ENCODE measurements at regions of chr20 and their contacts with region 1.

Region 1: GRCh38 chr20:62861726-62862336 is at the start of gene TCFL5:
- DNase-seq: peak; percentile 88 to 98 (median 92)
- ATAC-seq: peak; percentile 87
- H3K4me3 ChIP-seq: peak within 1 kb of the TSS; percentile 39
- H3K4me3 Mint-ChIP-seq: peak within 1 kb of the TSS; percentile 83
- H3K27ac ChIP-seq: peak within 1 kb of the TSS in 1 of 2 donors; percentile 21
- H3K27ac Mint-ChIP-seq: peak within 1 kb of the TSS; percentile 83
- H3K4me1 ChIP-seq: peaks cover 13% of the 10 kb centered on the region
- H3K4me1 Mint-ChIP-seq: peaks cover 27% of the 10 kb centered on the region
- H3K27me3 ChIP-seq: no peaks in the 10 kb centered on the region
- H3K27me3 Mint-ChIP-seq: no peaks in the 10 kb centered on the region
- CTCF ChIP-seq: no peak
- total RNA-seq, gene TCFL5: 5.9 to 6.3 TPM

Region 2: GRCh38 chr20:62219992-62220665 is 641.7 kb before region 1 on chr20 and contains the start of gene HRH3:
- CTCF ChIA-PET with region 1: no interaction called
- POLR2A ChIA-PET with region 1: no interaction called
- intact Hi-C with region 1: no loop called
- DNase-seq: peak in 13 of 14 experiments; percentile 13 to 74 (median 38)
- ATAC-seq: peak; percentile 89
- H3K4me3 ChIP-seq: no peak within 1 kb of the TSS
- H3K4me3 Mint-ChIP-seq: no peak within 1 kb of the TSS
- H3K27ac ChIP-seq: no peak within 1 kb of the TSS
- H3K27ac Mint-ChIP-seq: no peak within 1 kb of the TSS
- H3K4me1 ChIP-seq: peaks cover 16% of the 10 kb centered on the region
- H3K4me1 Mint-ChIP-seq: no peaks in the 10 kb centered on the region
- H3K27me3 ChIP-seq: peaks cover 52 to 55% of the 10 kb centered on the region in 2 experiments
- H3K27me3 Mint-ChIP-seq: peaks cover 54% of the 10 kb centered on the region
- CTCF ChIP-seq: no peak
- total RNA-seq, gene HRH3: not detected

Region 3: GRCh38 chr20:62652051-62652926 is 209.5 kb before region 1 on chr20:
- CTCF ChIA-PET with region 1: no interaction called
- POLR2A ChIA-PET with region 1: interaction called, 11 read pairs
- intact Hi-C with region 1: no loop called
- DNase-seq: peak; percentile 48 to 90 (median 64)
- ATAC-seq: peak; percentile 64
- H3K4me3 ChIP-seq: peak overlapping the region; percentile 56
- H3K4me3 Mint-ChIP-seq: peak overlapping the region; percentile 93
- H3K27ac ChIP-seq: peak overlapping the region; percentile 70 to 89
- H3K27ac Mint-ChIP-seq: peak overlapping the region; percentile 91
- H3K4me1 ChIP-seq: peaks cover 38% of the 10 kb centered on the region
- H3K4me1 Mint-ChIP-seq: peaks cover 30% of the 10 kb centered on the region
- H3K27me3 ChIP-seq: no peaks in the 10 kb centered on the region
- H3K27me3 Mint-ChIP-seq: no peaks in the 10 kb centered on the region
- CTCF ChIP-seq: no peak

Region 4: DNA sequence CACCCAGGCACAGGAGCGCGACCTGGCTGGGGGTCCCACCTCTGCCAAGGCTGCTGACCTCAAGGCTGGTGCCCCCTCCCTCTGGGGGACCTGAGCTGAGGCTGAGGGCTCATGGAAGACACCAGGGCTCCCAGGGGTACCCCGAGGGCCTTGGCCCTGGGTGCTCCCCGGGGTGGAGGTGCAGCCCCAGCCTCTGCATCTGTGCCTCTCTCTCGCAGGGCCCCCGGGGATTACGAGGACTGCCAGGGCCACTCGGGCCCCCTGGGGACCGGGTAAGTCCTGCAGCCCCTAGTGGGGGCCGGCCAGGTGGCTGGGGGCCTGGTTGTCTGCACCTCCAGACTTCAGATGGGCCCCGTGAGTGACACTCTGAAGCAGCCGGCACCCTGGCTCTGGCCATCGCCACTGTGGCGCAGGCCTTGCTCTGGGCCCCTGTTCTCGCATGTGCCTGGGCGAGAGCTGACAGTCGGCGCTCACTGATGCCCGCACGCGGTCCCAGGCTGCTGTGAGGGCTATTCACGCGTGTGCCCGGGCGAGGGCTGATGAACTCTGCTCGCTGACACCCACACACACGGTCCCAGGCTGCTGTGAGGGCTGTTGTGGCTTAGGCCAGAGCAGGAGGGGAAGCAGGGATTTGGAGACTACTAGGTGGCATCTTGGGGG is 35.7 kb before region 1 on chr20:
- CTCF ChIA-PET with region 1: no interaction called
- POLR2A ChIA-PET with region 1: interaction called, 3 read pairs
- intact Hi-C with region 1: loop called in 1 of 2 experiments (anchors 2 kb)
- DNase-seq: peak in 2 of 14 experiments; percentile 18 to 33
- ATAC-seq: no peak
- H3K4me3 ChIP-seq: no peak overlapping the region
- H3K4me3 Mint-ChIP-seq: no peak overlapping the region
- H3K27ac ChIP-seq: no peak overlapping the region
- H3K27ac Mint-ChIP-seq: no peak overlapping the region
- H3K4me1 ChIP-seq: peaks cover 11% of the 10 kb centered on the region
- H3K4me1 Mint-ChIP-seq: no peaks in the 10 kb centered on the region
- H3K27me3 ChIP-seq: no peaks in the 10 kb centered on the region
- H3K27me3 Mint-ChIP-seq: no peaks in the 10 kb centered on the region
- CTCF ChIP-seq: no peak

Region 5: DNA sequence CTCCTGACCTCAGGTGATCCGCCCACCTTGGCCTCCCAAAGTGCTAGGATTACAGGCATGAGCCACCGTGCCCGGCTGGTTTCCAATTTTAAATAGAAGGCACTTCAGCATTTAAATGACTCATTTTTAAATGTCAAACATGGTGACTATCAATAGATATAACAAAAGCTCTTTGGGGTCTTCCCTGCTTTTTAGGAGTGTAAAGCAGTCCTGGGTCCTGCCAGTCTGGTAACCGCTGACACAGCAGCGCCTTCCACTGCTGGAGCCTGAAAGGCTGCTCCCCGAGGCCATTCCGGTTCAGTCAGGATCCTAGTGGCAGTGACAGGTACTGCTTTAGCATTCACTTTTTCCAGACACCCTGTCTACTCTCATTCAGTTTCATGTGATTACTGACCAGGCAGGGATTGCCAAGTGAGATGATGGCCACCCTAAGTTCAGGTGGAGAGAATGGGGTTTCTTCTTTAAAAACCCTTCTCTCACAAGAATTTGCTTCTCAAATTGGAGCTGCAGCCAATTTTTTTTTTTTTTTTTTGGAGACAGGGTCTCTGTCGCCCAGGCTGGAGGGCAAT is 59.4 kb after region 1 on chr20:
- CTCF ChIA-PET with region 1: no interaction called
- POLR2A ChIA-PET with region 1: interaction called, 10 read pairs
- intact Hi-C with region 1: no loop called
- DNase-seq: peak in 13 of 14 experiments; percentile 32 to 85 (median 51)
- ATAC-seq: peak; percentile 67
- H3K4me3 ChIP-seq: no peak overlapping the region
- H3K4me3 Mint-ChIP-seq: peak overlapping the region; percentile 86
- H3K27ac ChIP-seq: peak overlapping the region; percentile 1 to 29
- H3K27ac Mint-ChIP-seq: peak overlapping the region; percentile 82
- H3K4me1 ChIP-seq: peaks cover 79% of the 10 kb centered on the region
- H3K4me1 Mint-ChIP-seq: peaks cover 89% of the 10 kb centered on the region
- H3K27me3 ChIP-seq: no peaks in the 10 kb centered on the region
- H3K27me3 Mint-ChIP-seq: no peaks in the 10 kb centered on the region
- CTCF ChIP-seq: peak; percentile 66

Region 6: DNA sequence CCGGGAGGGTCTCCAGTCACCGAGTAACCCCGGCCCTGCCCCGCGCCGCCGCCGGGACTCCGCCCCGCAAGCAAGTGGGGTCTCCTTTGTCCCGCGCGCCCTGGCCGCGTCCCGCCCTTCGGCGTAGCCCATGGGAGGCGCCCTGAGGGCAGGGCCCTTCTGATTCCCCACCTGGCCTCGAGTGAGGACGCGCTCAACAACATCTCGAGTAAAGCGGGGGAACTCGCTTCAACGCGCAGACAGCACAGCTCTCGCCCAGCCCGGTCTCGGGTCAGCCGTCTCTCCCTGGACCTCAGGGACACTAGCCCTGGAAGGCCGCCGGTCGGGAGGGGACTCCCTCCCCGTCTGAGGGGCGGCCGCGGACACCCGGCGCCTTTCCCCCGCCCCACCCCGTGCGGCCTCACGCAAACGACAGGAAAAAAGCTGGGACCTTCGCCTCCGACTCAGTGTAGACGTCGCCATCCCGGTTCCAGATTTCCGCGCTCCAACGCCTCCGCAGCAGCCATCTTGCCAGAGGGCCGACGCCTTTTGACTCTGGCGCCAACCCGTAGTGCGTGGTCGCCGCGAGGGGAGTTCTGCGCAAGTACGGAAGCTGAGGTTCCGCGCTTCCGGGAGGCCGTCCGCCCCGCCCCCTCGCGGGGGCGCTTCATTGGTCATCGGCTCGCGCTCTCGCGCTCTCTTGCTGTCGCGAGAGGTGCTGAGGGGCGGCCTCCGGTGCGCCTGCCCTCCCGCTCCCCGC is 75.7 kb after region 1 on chr20:
- CTCF ChIA-PET with region 1: no interaction called
- POLR2A ChIA-PET with region 1: interaction called, 10 read pairs
- intact Hi-C with region 1: no loop called
- DNase-seq: peak; percentile 94 to 98 (median 96)
- ATAC-seq: peak; percentile 88
- H3K4me3 ChIP-seq: peak overlapping the region; percentile 99
- H3K4me3 Mint-ChIP-seq: peak overlapping the region; percentile 96
- H3K27ac ChIP-seq: peak overlapping the region; percentile 84 to 87
- H3K27ac Mint-ChIP-seq: peak overlapping the region; percentile 92
- H3K4me1 ChIP-seq: peaks cover 64% of the 10 kb centered on the region
- H3K4me1 Mint-ChIP-seq: peaks cover 37% of the 10 kb centered on the region
- H3K27me3 ChIP-seq: no peaks in the 10 kb centered on the region
- H3K27me3 Mint-ChIP-seq: no peaks in the 10 kb centered on the region
- CTCF ChIP-seq: no peak

Region 7: GRCh38 chr20:63042448-63043071 is 180.7 kb after region 1 on chr20:
- CTCF ChIA-PET with region 1: no interaction called
- POLR2A ChIA-PET with region 1: no interaction called
- intact Hi-C with region 1: no loop called
- DNase-seq: no peak
- ATAC-seq: no peak
- H3K4me3 ChIP-seq: no peak overlapping the region
- H3K4me3 Mint-ChIP-seq: no peak overlapping the region
- H3K27ac ChIP-seq: no peak overlapping the region
- H3K27ac Mint-ChIP-seq: no peak overlapping the region
- H3K4me1 ChIP-seq: no peaks in the 10 kb centered on the region
- H3K4me1 Mint-ChIP-seq: no peaks in the 10 kb centered on the region
- H3K27me3 ChIP-seq: peaks cover 4 to 8% of the 10 kb centered on the region in 2 experiments
- H3K27me3 Mint-ChIP-seq: peaks cover 55% of the 10 kb centered on the region
- CTCF ChIP-seq: no peak